OCI-LY7 (cell line): ENCODE measurements at regions of chr20 and their contacts with region 1.

Region 1: DNA sequence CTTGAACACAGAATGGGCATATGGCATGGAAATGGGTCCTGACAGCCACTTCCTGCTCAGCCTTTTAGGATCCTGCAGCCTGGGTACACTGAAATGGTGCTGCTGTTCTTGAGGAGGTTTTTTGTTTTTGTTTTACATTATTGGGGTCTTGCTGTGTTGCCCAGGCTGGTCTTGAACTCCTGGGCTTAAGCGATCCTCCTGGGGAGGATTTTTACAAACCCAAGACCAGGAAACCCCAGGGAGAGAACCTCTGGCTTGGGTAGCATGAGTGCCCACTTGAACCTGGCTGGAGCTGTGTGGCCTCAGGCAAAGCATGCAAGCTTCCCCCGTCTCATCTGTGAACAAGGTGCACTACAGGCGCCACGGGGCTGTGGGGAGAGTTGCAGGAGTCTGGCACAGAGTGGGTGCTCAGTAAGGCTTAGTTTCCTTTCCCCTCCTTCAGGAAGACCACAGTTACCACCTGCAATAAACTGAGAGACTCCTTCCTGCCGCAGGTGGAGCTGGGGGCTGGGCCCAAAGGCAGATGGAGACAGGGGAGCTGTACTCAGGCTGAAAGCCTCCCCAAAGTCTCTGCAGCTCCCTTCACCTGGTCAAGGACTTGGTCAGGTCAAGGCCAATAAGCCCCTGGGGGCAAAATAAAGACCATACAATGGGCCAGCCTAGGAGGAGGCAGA is 1.8 kb downstream of the SLA2 start:
- DNase-seq: peak; percentile 69
- H3K4me3 ChIP-seq: peak overlapping the region; percentile 17
- H3K27ac ChIP-seq: peak overlapping the region; percentile 28
- H3K4me1 ChIP-seq: peaks cover 26% of the 10 kb centered on the region
- CTCF ChIP-seq: no peak; the same call in 1 of the 2 replicates

Region 2: DNA sequence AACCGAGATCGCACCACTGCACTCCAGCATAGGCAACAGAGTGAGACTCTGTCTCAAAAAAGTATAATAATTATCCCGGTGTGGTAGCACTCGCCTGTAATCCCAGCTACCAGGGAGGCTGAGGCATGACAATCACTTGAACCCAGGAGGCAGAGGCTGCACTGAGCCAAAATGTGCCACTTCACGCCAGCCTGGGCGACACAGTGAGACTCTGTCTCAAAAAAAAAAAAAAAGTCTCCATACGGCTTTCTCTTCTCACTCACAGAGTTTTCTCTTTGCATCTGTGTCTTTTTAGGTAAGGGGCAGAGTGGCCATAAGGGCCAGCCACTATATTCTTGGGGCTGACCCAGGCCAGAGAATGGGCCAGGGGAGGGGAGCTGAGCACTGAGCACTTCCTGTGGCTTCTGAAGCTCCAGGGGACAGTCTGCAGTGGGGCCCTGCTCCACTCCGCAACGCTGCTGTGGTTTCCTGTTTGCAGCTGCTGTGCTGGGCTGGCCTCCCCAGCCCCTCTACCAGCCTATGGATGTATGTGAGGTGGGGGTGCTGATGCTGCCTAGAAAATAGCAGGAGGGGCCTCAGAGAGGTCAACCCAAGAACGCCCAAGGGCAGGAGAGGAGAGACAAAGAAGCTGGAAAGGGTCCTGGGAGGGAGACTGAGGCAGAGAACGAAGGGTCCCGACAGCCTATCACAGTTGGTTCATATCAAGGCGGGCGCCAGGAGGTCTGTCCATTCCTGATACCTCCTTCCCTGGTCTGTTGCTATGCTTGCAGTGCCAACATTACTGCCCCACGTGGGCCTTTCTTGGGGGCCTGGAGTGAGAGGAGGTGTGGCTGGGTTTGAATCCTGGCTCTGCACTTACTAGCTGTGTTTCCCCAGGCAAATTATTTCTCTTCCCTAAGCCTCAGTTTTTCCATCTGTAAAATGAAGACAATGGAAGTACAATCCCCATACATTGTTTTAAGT is 14.2 kb before region 1 on chr20:
- CTCF ChIA-PET with region 1: interaction called, 10 read pairs
- POLR2A ChIA-PET with region 1: interaction called, 3 read pairs
- intact Hi-C with region 1: no loop called
- DNase-seq: peak; percentile 78
- H3K4me3 ChIP-seq: peak overlapping the region; percentile 30
- H3K27ac ChIP-seq: peak overlapping the region; percentile 26
- H3K4me1 ChIP-seq: peaks cover 15% of the 10 kb centered on the region
- CTCF ChIP-seq: no peak